ENCODE measurements at regions of chr1 and their contacts with region 1.

Region 1: DNA sequence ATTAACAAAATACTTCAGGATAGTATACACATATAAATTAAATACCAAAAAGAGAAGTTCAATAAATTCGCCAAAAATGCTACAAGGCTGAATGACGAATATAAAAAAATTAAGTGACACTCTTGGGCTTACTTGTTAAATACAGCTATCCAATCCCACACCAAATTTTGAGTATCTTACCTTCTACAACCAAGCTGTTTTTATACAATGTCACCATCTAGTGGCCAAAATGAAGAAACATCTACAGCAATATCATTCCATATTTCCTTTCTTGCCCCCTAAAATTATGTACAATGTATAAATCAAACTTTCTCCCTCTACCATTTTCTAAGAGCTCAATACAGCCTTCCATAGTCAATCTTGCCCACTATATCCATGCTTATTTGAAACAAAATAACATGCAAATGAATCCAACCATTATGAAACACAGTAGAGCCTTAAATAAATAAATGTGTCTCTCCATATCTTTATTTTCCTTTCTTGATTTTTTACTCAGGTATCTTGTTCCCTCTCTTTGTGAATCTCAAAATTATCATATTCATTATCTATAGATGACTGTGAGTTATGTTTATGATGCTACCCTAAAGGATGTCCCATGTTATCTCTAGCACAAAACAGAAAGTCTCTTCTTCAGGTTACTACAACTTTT is 86.3 kb downstream of the ACBD6 start:
- DNase-seq: no peak

Region 2: GRCh38 chr1:180259431-180260338 is 156.4 kb before region 1 on chr1:
- intact Hi-C with region 1: loop called (anchors 2 kb)
- DNase-seq: peak; percentile 72

Region 3: DNA sequence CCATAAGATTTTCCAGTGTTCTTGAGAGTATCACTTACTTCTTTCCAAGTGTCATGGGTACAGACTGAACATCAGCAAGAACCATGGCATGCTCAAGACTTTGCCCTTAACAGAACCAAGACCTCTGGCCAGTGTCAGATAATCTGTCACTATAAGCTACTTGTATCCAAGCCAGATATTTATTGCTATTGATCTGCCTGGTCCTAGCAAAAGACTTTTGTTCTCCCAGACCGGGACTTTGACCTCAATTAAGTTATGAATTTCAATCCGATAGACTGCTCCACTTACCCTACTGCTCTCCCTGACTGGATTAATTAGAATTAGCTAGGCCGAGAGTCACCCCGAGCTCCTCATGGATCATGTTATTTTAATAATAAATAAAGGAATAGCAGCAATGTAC is 43.4 kb before region 1 on chr1:
- intact Hi-C with region 1: no loop called
- DNase-seq: no peak

Measured in cardiac septum (tissue), 1 donor.